ENCODE measurements at regions of chr5 and their contacts with region 1.

Region 1: GRCh38 chr5:59380350-59380951 is 513.1 kb downstream of the PDE4D start:
- DNase-seq: peak; percentile 69
- ATAC-seq: peak; percentile 89
- H3K4me3 Mint-ChIP-seq: no peak overlapping the region
- H3K27ac Mint-ChIP-seq: no peak overlapping the region
- H3K4me1 Mint-ChIP-seq: peaks cover 4% of the 10 kb centered on the region
- H3K27me3 Mint-ChIP-seq: peaks cover 4% of the 10 kb centered on the region
- CTCF ChIP-seq: peak; percentile 72

Region 2: DNA sequence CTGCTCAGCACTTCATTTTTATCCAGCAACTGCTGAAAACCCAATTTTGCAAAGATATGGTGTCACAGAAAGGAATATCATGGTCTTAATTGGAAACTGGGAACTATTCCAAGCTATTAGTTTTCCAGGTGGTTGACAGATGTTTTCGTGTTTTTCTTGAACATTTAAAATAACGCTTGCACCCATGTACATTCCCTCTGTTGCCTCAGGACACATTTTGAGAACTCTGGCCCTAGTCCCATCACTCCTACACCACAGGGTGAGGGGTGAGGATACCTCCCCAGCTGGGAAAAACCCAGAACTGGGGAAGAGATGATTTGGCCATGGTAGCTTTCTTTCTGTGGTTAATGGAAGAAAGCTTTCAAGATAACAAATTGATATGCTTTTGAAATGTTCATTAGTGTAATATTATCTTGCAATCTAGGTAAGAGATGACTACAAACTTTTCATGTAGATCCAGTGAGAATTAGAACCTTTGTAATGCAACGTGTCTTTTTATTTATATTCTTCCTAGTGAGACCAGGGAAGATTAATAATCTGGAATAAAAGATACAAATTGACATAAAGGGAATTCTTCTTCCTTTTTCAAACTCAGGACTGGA is 170.6 kb before region 1 on chr5:
- CTCF ChIA-PET with region 1: interaction called, 14 read pairs
- POLR2A ChIA-PET with region 1: no interaction called
- intact Hi-C with region 1: no loop called
- DNase-seq: no peak
- ATAC-seq: no peak
- H3K4me3 Mint-ChIP-seq: no peak overlapping the region
- H3K27ac Mint-ChIP-seq: no peak overlapping the region
- H3K4me1 Mint-ChIP-seq: peaks cover 6% of the 10 kb centered on the region
- H3K27me3 Mint-ChIP-seq: peaks cover 12% of the 10 kb centered on the region
- CTCF ChIP-seq: no peak

Region 3: DNA sequence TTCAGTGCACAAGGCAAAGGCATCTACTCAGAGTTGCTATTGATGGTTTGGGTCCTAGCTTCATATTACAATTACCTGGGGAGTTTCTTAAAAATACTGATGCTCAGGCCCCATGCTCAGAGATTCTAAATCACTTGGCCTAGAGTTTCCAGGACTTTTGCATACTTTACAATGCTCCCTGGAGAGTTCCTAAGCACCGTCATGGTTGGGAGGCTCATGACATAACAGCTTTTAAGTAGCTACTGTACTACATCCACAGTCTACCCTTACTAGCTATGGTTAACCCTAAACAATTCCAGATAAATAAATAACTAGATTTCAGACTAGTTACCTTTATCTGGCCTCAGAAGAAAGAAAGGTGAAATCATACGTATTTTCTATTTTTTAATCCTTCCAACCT is 98.6 kb after region 1 on chr5:
- CTCF ChIA-PET with region 1: no interaction called
- POLR2A ChIA-PET with region 1: no interaction called
- intact Hi-C with region 1: no loop called
- DNase-seq: no peak
- ATAC-seq: no peak
- H3K4me3 Mint-ChIP-seq: no peak overlapping the region
- H3K27ac Mint-ChIP-seq: no peak overlapping the region
- H3K4me1 Mint-ChIP-seq: peaks cover 3% of the 10 kb centered on the region
- H3K27me3 Mint-ChIP-seq: no peaks in the 10 kb centered on the region
- CTCF ChIP-seq: no peak